OCI-LY7 (cell line): ENCODE measurements at regions of chr1 and their contacts with region 1.

Region 1: GRCh38 chr1:114282751-114283403 is 129.2 kb upstream of the SYT6 start:
- DNase-seq: peak; percentile 82
- H3K4me3 ChIP-seq: no peak overlapping the region
- H3K27ac ChIP-seq: no peak overlapping the region
- H3K4me1 ChIP-seq: no peaks in the 10 kb centered on the region
- CTCF ChIP-seq: peak; percentile 96

Region 2: DNA sequence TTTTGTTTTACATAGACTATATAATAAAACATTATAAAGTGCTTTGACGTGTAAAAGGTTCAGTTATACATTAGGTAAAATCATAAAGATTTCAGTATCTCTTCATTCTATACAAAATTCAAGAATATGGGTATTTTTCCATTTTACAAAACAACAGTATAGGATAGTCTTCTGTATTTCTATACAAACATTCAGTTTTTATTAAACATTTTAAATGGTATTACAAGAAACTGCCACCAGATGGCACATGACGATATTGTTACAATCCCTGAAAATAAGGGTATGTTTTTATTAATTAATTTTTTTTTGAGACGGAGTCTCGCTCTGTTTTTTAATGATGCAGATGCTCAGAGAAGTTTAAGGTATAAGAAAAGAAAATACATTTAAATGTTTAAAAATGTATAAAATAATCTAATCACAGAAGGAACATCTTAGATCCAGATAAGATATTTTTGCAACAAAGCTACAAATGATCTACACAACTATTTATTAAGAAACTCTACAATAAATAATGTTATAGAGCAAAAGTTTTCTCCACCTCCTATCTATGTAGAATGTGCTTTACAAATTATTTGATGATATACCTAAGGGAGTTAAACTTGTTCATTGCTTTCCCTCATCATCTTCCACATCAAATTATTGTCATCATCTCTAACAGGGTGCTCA is 447.1 kb before region 1 on chr1:
- CTCF ChIA-PET with region 1: no interaction called
- POLR2A ChIA-PET with region 1: no interaction called
- intact Hi-C with region 1: loop called (anchors 5 kb)
- DNase-seq: peak; percentile 71
- H3K4me3 ChIP-seq: no peak overlapping the region
- H3K27ac ChIP-seq: no peak overlapping the region
- H3K4me1 ChIP-seq: no peaks in the 10 kb centered on the region
- CTCF ChIP-seq: peak; percentile 91

Region 3: DNA sequence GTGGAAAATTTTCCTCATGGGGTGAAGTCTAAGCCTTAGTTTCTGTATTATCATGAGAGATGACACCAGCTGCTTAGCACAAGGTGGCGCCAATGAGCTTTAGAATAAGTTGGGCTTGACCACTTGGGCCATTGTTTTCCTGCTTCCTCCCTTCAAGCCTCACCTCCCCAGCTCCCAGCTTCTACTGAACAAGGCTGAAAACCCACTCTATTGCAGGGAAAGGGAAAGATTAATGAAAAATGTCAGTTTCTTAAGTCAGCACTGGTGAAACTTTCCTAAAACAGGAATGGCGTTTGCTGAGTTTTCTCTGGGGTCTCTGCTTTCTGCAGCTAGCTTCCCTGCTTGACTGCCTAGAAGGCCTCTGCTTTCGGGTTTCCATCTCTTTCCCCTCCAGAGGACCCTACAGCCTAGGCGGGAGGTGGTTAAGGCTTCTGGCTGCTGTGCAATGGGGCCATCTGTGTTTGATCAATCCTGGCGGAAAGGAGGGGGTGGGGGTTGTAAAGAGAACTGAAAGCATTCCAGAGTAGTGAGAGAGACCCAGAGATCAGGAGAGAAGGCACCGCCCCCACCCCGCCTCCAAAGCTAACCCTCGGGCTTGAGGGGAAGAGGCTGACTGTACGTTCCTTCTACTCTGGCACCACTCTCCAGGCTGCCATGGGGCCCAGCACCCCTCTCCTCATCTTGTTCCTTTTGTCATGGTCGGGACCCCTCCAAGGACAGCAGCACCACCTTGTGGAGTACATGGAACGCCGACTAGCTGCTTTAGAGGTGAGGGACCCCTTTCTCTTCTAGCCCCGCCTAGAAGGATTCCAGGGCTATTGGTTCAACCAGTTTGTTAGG is 303.8 kb before region 1 on chr1 and contains the start of gene OLFML3:
- CTCF ChIA-PET with region 1: interaction called, 6 read pairs
- POLR2A ChIA-PET with region 1: interaction called, 4 read pairs
- intact Hi-C with region 1: loop called (anchors 1 kb)
- DNase-seq: peak; percentile 81
- H3K4me3 ChIP-seq: no peak within 1 kb of the TSS
- H3K27ac ChIP-seq: no peak within 1 kb of the TSS
- H3K4me1 ChIP-seq: peaks cover 17% of the 10 kb centered on the region
- CTCF ChIP-seq: peak; percentile 87
- total RNA-seq, gene OLFML3: 0.21 and 0.44 TPM in 2 replicates